ENCODE measurements at regions of chr3 and their contacts with region 1.

Region 1: DNA sequence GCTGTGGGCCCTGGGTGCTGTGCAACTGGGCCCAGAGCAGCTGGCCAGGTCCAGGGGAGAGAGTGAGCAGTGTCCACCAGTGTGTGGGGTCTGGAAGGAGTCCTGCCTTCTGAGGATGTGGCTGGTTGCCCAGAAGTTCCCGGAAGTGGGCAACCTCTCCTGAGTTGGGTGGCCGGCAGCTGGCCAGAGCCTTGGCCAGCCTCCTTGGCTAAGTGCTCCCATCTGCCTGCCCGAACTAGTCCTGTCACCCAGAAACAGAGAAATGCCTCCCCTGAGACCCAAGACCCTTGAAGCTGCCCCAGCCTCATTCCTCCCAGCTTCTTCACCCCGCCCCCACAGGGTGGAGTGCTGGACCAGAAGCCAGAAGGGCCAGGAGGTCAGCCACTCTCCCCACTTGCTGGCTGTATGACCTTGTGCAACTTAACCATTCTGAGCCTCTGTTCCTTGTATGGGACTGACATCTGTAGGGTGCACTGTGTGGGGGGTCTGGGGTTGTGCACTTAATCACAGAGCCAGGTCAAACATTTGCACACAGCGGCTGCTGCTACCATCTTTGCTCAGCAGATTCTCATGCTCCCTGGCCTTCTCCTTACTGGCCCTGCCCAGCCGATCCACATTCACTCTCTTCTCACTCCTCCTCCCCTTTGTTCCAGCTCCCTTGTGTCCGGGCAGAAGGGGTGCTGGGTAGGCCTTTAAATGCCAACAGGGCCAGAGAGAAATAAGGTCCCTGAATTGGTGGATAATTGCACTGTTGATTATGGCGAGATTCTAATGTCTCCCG is 7.5 kb upstream of the ALAS1 start:
- DNase-seq: peak in 1 of 5 donors; percentile 55
- ATAC-seq: peak in 3 of 4 donors; percentile 15 to 39 (median 35)
- H3K4me3 ChIP-seq: no peak overlapping the region
- H3K27ac ChIP-seq: peak overlapping the region in 5 of 12 donors; percentile 19 to 42 (median 34)
- H3K4me1 ChIP-seq: peaks cover 0 to 32% (median 12%) of the 10 kb centered on the region in 12 donors
- H3K27me3 ChIP-seq: no peaks in the 10 kb centered on the region
- CTCF ChIP-seq: no peak
- POLR2A ChIP-seq: no peak

Region 2: GRCh38 chr3:52154117-52155094 is 36.1 kb before region 1 on chr3 and contains the start of gene POC1A:
- intact Hi-C with region 1: loop called in 4 of 10 experiments (anchors 5 kb)
- DNase-seq: peak; percentile 95 to 99 (median 96)
- ATAC-seq: peak; percentile 98 to 99 (median 98)
- H3K4me3 ChIP-seq: peak within 1 kb of the TSS; percentile 38 to 73 (median 66)
- H3K27ac ChIP-seq: peak within 1 kb of the TSS; percentile 9 to 95 (median 88)
- H3K4me1 ChIP-seq: peaks cover 4 to 18% (median 13%) of the 10 kb centered on the region in 12 donors
- H3K27me3 ChIP-seq: no peaks in the 10 kb centered on the region
- CTCF ChIP-seq: peak in 6 of 12 donors; percentile 8 to 34 (median 19)
- POLR2A ChIP-seq: peak in 1 of 2 donors; percentile 64
- total RNA-seq, gene POC1A: 0.66 to 5.2 (median 1.4) TPM

Region 3: DNA sequence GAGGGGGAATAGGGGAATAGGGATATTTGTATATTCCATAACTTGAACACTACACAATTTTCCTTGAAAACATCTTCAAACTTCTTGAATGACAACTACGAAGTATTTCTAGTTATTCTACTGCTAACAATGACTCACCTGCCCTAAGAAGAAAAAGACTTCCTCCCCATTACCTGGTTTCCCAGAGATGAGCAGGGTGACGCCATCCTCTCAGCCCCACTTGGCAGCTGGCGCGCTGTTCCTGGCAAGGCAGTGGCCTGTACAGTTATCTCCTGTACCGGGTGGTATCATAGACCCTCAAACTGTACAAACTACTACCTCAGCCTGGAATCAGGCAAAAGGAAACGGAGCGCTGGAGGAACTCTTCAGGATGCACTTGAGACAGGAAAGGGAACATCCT is 77.6 kb after region 1 on chr3:
- intact Hi-C with region 1: no loop called
- DNase-seq: no peak
- ATAC-seq: no peak
- H3K4me3 ChIP-seq: no peak overlapping the region
- H3K27ac ChIP-seq: peak overlapping the region in 1 of 12 donors; percentile 33
- H3K4me1 ChIP-seq: peaks cover 3 to 61% (median 43%) of the 10 kb centered on the region in 12 donors
- H3K27me3 ChIP-seq: no peaks in the 10 kb centered on the region
- CTCF ChIP-seq: no peak
- POLR2A ChIP-seq: no peak

Region 4: DNA sequence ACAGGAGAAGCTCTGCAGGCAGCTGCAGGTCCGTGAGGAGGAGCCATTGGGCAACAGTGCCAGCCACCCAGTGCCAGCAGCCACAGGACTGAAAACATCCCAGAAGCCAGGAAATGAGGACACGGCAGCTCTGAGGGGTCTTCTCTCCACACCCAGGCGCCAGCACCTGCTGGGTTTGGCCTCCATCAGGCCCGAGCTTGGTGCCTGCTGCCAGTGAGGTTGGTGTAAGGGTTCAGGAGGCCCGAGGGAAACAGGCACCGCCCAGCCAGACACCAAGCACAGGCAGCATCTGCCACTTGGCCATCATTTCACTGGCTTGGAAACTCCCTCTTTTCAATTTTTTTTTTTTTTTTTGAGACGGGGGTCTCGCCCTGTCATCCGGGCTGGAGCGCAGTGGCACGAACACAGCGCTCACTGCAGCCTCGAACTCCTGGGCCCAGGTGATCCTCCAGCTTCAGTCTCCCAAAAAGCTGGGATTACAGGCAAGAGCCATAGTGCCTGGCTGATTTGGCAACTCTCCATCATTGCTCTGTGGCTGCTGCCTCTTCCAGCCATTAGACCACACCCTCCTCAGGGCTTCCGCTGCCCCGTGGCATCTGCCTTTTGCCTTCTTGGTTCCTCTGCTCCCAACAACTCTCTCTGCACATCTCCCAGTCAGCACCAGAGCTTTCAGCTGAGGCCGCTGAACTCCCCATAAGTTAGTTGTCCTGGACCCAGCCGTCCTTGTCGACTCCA is 602.6 kb after region 1 on chr3:
- intact Hi-C with region 1: no loop called
- DNase-seq: no peak
- ATAC-seq: no peak
- H3K4me3 ChIP-seq: no peak overlapping the region
- H3K27ac ChIP-seq: no peak overlapping the region
- H3K4me1 ChIP-seq: no peaks in the 10 kb centered on the region
- H3K27me3 ChIP-seq: no peaks in the 10 kb centered on the region
- CTCF ChIP-seq: no peak
- POLR2A ChIP-seq: no peak

Measured in heart left ventricle (tissue), 16 donors.